ENCODE measurements at regions of chr22 and their contacts with region 1.

Region 1: GRCh38 chr22:29267858-29268417 is at the starts of genes EWSR1 and RHBDD3:
- DNase-seq: peak; percentile 90 to 100 (median 97)
- ATAC-seq: peak; percentile 94
- H3K4me3 ChIP-seq: peak within 1 kb of the TSS; percentile 96
- H3K4me3 Mint-ChIP-seq: peak within 1 kb of the TSS; percentile 93 to 100 (median 96)
- H3K27ac ChIP-seq: peak within 1 kb of the TSS; percentile 98
- H3K27ac Mint-ChIP-seq: peak within 1 kb of the TSS; percentile 97 to 100 (median 99)
- H3K4me1 ChIP-seq: peaks cover 39 to 41% of the 10 kb centered on the region in 2 donors
- H3K4me1 Mint-ChIP-seq: peaks cover 44 to 59% (median 54%) of the 10 kb centered on the region in 7 donors
- H3K27me3 ChIP-seq: no peaks in the 10 kb centered on the region
- H3K27me3 Mint-ChIP-seq: peaks cover 0 to 5% (median 0%) of the 10 kb centered on the region in 5 donors
- total RNA-seq, gene EWSR1: 249 to 366 (median 273) TPM
- total RNA-seq, gene RHBDD3: 10.8 to 39.4 (median 14.7) TPM

Region 2: DNA sequence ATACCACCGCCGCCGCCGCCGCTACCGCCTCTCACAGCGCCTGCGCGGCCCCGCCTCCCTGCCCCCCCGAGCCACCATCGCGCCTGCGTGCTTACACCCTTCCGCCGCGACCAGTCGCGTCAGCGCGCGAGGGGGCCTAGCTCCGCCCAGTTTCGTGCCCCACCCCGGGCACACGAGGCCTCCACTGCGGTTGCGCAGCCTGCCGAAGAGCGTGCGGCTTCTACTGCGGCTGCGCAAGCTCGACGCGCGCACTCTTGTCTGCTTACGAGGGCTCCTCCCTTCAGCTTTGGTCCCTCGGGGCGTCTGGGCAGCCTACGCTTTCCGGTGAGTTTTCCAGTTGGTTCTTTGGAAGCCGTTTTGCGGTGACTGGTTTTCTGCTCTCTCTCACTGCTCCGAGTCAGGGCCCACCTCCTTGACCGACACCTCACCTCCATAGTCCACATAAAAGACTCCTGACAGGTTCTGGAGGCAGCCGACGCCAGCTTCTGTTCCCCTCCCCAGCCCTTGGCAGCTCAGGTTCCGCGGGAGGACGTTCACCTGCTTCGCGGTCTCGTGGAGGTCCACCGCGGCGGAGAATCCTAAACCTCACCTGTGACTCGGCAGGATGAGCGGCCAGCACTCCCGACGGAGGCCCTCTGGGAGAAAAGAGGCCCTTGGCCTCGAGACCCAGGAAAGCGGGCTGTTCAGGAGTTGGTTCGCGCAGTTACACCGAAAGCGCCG is 1348.6 kb before region 1 on chr22 and contains the start of gene PITPNB:
- CTCF ChIA-PET with region 1: no interaction called
- POLR2A ChIA-PET with region 1: no interaction called
- intact Hi-C with region 1: loop called in 1 of 2 experiments (anchors 2 kb)
- DNase-seq: peak; percentile 97 to 100 (median 99)
- ATAC-seq: peak; percentile 95
- H3K4me3 ChIP-seq: peak within 1 kb of the TSS; percentile 84
- H3K4me3 Mint-ChIP-seq: peak within 1 kb of the TSS; percentile 97 to 100 (median 99)
- H3K27ac ChIP-seq: peak within 1 kb of the TSS; percentile 94
- H3K27ac Mint-ChIP-seq: peak within 1 kb of the TSS; percentile 93 to 99 (median 99)
- H3K4me1 ChIP-seq: peaks cover 29 to 32% of the 10 kb centered on the region in 2 donors
- H3K4me1 Mint-ChIP-seq: peaks cover 56 to 85% (median 75%) of the 10 kb centered on the region in 7 donors
- H3K27me3 ChIP-seq: no peaks in the 10 kb centered on the region
- H3K27me3 Mint-ChIP-seq: peaks cover 0 to 4% (median 0%) of the 10 kb centered on the region in 5 donors
- total RNA-seq, gene PITPNB: 56.3 to 98.8 (median 62.8) TPM

Region 3: GRCh38 chr22:28741758-28742561 is 526.0 kb before region 1 on chr22 and contains the starts of genes CHEK2 and HSCB:
- CTCF ChIA-PET with region 1: no interaction called
- POLR2A ChIA-PET with region 1: no interaction called
- intact Hi-C with region 1: loop called (anchors 1 to 2 kb)
- DNase-seq: peak; percentile 80 to 99 (median 96)
- ATAC-seq: peak; percentile 98
- H3K4me3 ChIP-seq: peak within 1 kb of the TSS; percentile 99
- H3K4me3 Mint-ChIP-seq: peak within 1 kb of the TSS; percentile 81 to 94 (median 87)
- H3K27ac ChIP-seq: peak within 1 kb of the TSS; percentile 90
- H3K27ac Mint-ChIP-seq: peak within 1 kb of the TSS; percentile 79 to 93 (median 89)
- H3K4me1 ChIP-seq: peaks cover 3 to 9% of the 10 kb centered on the region in 2 donors
- H3K4me1 Mint-ChIP-seq: peaks cover 14 to 49% (median 38%) of the 10 kb centered on the region in 7 donors
- H3K27me3 ChIP-seq: no peaks in the 10 kb centered on the region
- H3K27me3 Mint-ChIP-seq: no peaks in the 10 kb centered on the region
- total RNA-seq, gene CHEK2: 8.4 to 36.7 (median 10.6) TPM
- total RNA-seq, gene HSCB: 8.2 to 10.9 (median 9.0) TPM

Region 4: DNA sequence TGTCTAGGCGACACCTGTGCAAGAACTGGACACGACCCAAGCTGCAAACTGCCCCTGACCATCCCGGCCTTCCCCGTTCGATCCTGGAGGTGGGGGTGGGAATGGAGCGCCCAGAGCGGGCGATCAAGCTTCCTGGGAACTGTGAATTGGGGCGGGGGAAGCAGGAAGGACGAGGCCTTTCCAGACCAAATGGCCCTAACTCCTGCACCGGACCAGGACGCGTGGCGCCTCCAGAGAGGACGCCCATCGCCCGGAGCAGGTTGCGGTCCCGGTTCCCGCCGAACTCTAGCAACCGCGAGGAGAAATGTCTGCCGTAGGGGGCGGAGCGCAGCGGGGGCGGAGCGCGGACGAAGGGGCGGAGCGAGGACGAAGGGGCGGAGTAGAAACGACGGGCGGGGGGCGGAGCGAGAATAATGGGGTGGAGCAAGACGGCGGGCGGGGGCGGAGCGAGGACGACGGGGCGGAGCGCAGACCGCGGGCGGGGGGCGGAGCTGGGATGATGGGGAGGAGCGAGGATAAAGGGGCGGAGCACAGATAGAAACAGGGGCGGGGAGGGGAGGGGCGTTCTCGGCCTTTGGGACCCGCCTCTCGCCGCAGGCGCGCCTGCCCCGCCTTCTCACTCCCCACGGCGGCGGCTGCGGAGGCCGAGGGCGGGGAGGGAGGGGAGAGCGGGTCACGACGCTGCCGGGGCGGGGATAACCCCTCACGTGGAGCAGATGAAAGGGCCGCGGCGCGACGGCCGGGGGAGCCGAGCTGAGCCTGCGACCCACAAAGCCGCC is 384.9 kb before region 1 on chr22 and contains the start of gene ZNRF3:
- CTCF ChIA-PET with region 1: no interaction called
- POLR2A ChIA-PET with region 1: no interaction called
- intact Hi-C with region 1: loop called in 1 of 2 experiments (anchors 1 kb)
- DNase-seq: peak; percentile 76 to 91 (median 87)
- ATAC-seq: peak; percentile 98
- H3K4me3 ChIP-seq: peak within 1 kb of the TSS; percentile 90
- H3K4me3 Mint-ChIP-seq: peak within 1 kb of the TSS; percentile 66 to 94 (median 88)
- H3K27ac ChIP-seq: peak within 1 kb of the TSS; percentile 15
- H3K27ac Mint-ChIP-seq: peak within 1 kb of the TSS; percentile 33 to 78 (median 62)
- H3K4me1 ChIP-seq: peaks cover 8 to 12% of the 10 kb centered on the region in 2 donors
- H3K4me1 Mint-ChIP-seq: peaks cover 13 to 29% (median 21%) of the 10 kb centered on the region in 7 donors
- H3K27me3 ChIP-seq: peaks cover 0 to 3% of the 10 kb centered on the region in 2 donors
- H3K27me3 Mint-ChIP-seq: peaks cover 8 to 72% (median 16%) of the 10 kb centered on the region in 5 donors
- total RNA-seq, gene ZNRF3: 0.59 to 0.98 (median 0.70) TPM

Region 5: GRCh38 chr22:29387921-29388758 is 120.2 kb after region 1 on chr22 and contains the start of gene AP1B1:
- CTCF ChIA-PET with region 1: no interaction called
- POLR2A ChIA-PET with region 1: no interaction called
- intact Hi-C with region 1: loop called in 1 of 2 experiments (anchors 10 kb)
- DNase-seq: peak; percentile 79 to 96 (median 86)
- ATAC-seq: peak; percentile 98
- H3K4me3 ChIP-seq: peak within 1 kb of the TSS; percentile 87
- H3K4me3 Mint-ChIP-seq: peak within 1 kb of the TSS; percentile 91 to 96 (median 94)
- H3K27ac ChIP-seq: peak within 1 kb of the TSS; percentile 73
- H3K27ac Mint-ChIP-seq: peak within 1 kb of the TSS; percentile 87 to 97 (median 90)
- H3K4me1 ChIP-seq: peaks cover 7 to 13% of the 10 kb centered on the region in 2 donors
- H3K4me1 Mint-ChIP-seq: peaks cover 31 to 51% (median 48%) of the 10 kb centered on the region in 7 donors
- H3K27me3 ChIP-seq: no peaks in the 10 kb centered on the region
- H3K27me3 Mint-ChIP-seq: no peaks in the 10 kb centered on the region
- total RNA-seq, gene AP1B1: 38.5 to 77.7 (median 45.8) TPM

Region 6: DNA sequence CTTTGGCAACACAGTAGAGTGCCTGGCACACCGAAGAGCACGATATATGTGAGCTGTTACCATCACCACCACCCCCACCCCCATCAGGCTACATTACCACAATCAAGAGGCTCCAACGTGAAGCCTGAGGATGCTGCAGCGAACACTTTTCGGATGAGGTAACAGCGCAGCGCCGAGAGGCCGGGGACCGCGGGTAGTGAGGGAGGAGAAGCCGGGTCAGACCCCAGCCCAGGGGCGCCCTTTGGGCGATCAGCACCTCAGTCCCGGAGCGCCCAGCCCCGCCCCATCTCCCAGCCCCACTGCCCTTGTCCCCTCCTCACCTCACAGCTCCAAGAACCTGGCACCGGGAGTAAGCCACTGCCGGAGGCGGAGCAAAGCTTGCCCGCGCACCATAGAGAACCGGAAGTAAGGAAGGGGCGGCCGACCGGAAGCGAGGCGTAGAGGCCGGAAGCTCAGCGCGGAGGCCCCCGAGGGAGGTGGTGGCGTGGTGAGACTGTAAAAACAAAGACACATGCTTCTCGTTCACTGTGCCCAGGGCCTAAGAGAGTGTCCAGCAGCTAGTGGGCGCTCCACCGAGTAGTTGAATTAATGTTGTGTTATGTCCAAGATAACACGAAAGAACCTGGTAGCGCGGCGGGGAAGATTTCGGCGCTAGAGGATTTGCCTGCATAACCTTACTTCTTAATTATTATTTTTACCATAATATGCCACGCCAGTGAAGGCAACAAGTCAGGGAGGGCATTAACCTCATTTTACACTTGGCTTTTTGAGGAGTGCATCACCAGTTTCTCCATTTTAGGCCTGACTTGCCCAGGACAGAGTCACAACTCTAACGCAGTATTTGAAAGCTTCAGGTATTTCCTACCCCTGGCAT is 285.6 kb after region 1 on chr22 and contains the start of gene THOC5:
- CTCF ChIA-PET with region 1: no interaction called
- POLR2A ChIA-PET with region 1: no interaction called
- intact Hi-C with region 1: loop called (anchors 5 kb)
- DNase-seq: peak; percentile 74 to 90 (median 88)
- ATAC-seq: peak; percentile 97
- H3K4me3 ChIP-seq: peak within 1 kb of the TSS; percentile 96
- H3K4me3 Mint-ChIP-seq: peak within 1 kb of the TSS; percentile 84 to 99 (median 94)
- H3K27ac ChIP-seq: peak within 1 kb of the TSS; percentile 84
- H3K27ac Mint-ChIP-seq: peak within 1 kb of the TSS; percentile 94 to 99 (median 98)
- H3K4me1 ChIP-seq: peaks cover 4 to 7% of the 10 kb centered on the region in 2 donors
- H3K4me1 Mint-ChIP-seq: peaks cover 12 to 36% (median 29%) of the 10 kb centered on the region in 7 donors
- H3K27me3 ChIP-seq: no peaks in the 10 kb centered on the region
- H3K27me3 Mint-ChIP-seq: no peaks in the 10 kb centered on the region
- total RNA-seq, gene THOC5: 45.7 to 61.9 (median 57.1) TPM

Region 7: DNA sequence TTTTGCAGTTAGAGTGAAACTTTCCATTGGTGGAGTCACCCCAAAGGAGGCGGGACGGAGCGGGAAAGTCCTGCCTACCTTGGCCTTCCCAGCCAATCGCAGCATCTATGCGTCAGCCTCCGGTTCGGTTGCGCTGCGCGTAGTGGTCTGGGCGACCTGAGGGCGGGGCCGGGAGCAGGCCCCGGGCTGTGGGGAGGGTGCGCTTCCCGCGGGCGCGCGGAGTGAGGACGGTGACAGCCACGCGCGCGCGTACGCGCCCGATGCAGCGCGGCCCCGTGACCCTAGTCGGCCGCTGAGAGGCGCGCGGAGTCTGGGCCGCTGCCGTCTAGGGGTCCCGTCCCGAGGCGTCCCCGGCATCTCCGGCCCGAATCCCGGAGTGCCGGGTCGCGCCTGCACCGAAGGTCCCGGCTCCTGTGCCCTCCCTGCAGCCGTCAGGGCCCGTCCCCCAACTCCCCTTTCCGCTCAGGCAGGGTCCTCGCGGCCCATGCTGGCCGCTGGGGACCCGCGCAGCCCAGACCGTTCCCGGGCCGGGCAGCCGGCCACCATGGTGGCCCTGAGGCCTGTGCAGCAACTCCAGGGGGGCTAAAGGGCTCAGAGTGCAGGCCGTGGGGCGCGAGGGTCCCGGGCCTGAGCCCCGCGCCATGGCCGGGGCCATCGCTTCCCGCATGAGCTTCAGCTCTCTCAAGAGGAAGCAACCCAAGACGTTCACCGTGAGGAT is 335.6 kb after region 1 on chr22 and contains the start of gene NF2:
- CTCF ChIA-PET with region 1: no interaction called
- POLR2A ChIA-PET with region 1: no interaction called
- intact Hi-C with region 1: loop called in 1 of 2 experiments (anchors 5 kb)
- DNase-seq: peak; percentile 96 to 99 (median 98)
- ATAC-seq: peak; percentile 98
- H3K4me3 ChIP-seq: peak within 1 kb of the TSS; percentile 92
- H3K4me3 Mint-ChIP-seq: peak within 1 kb of the TSS; percentile 85 to 98 (median 96)
- H3K27ac ChIP-seq: peak within 1 kb of the TSS; percentile 91
- H3K27ac Mint-ChIP-seq: peak within 1 kb of the TSS; percentile 91 to 99 (median 98)
- H3K4me1 ChIP-seq: peaks cover 11 to 16% of the 10 kb centered on the region in 2 donors
- H3K4me1 Mint-ChIP-seq: peaks cover 13 to 40% (median 28%) of the 10 kb centered on the region in 7 donors
- H3K27me3 ChIP-seq: no peaks in the 10 kb centered on the region
- H3K27me3 Mint-ChIP-seq: no peaks in the 10 kb centered on the region
- total RNA-seq, gene NF2: 27.6 to 56.3 (median 28.3) TPM

Region 8: GRCh38 chr22:29663180-29663821 is 395.4 kb after region 1 on chr22:
- CTCF ChIA-PET with region 1: no interaction called
- POLR2A ChIA-PET with region 1: no interaction called
- intact Hi-C with region 1: no loop called
- DNase-seq: no peak
- ATAC-seq: no peak
- H3K4me3 ChIP-seq: no peak overlapping the region
- H3K4me3 Mint-ChIP-seq: no peak overlapping the region
- H3K27ac ChIP-seq: no peak overlapping the region
- H3K27ac Mint-ChIP-seq: no peak overlapping the region
- H3K4me1 ChIP-seq: no peaks in the 10 kb centered on the region
- H3K4me1 Mint-ChIP-seq: peaks cover 0 to 6% (median 0%) of the 10 kb centered on the region in 7 donors
- H3K27me3 ChIP-seq: no peaks in the 10 kb centered on the region
- H3K27me3 Mint-ChIP-seq: no peaks in the 10 kb centered on the region

Measured in naive thymus-derived CD4-positive, alpha-beta T cell (primary cell).